ENCODE measurements at regions of chr20 and their contacts with region 1.

Region 1: DNA sequence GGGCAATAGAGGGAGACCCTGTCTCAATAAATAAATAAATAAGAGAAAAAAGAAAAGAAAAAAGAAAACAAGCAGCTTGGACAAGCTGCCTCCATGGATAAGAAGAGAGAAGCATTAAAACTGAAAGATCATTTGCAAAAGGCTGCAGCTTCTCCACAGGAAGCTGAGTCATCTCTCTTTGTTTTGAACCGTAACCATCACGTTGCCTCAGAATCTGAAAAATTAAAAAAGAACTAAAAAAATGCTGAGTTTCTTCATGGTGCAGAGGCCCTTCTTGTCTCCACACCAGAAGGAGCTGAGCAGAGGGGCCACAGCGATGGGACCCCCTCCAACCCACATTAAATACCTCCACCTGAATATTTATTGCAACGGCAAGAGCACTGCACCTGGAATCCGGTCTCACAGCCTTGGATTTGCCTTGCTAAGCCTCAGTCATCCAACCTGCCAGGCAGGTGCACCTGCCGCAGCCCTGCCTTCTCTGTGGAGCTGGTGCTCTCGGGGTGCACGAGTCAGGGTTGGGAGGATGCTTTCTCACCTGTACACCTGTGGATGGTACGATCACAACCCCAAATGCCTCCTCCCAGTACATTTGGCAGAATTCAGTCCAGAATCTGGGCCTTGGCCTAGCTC is 28.1 kb downstream of the TOX2 start:
- DNase-seq: peak; percentile 85
- ATAC-seq: peak; percentile 31
- H3K4me3 ChIP-seq: no peak overlapping the region
- H3K27ac ChIP-seq: peak overlapping the region; percentile 77
- H3K4me1 ChIP-seq: peaks cover 39% of the 10 kb centered on the region
- H3K27me3 ChIP-seq: no peaks in the 10 kb centered on the region
- CTCF ChIP-seq: no peak
- POLR2A ChIP-seq: no peak
- RAD21 ChIP-seq: no peak

Region 2: DNA sequence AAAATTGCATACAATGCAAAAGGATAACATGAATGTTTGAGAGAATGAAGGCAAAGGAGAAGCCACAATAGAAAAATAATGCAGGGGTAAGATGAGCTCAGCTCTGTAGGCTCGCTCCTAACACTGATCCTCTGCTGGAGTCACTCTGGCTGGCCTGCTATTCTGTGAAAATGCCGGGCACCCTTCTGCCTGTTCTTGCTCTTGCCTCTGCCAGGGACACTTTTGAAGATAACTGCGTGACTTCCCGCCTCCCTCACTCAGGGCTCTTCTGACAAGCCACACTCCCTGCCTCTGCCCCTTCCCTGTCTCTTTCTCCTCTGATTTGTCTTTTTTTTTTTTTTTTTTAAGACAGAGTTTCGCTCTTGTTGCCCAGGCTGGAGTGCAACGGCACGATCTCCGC is 311.2 kb before region 1 on chr20:
- CTCF ChIA-PET with region 1: no interaction called
- POLR2A ChIA-PET with region 1: no interaction called
- dilution Hi-C with region 1: no loop called
- in situ Hi-C with region 1: no loop called
- intact Hi-C with region 1: no loop called
- DNase-seq: no peak
- ATAC-seq: no peak
- H3K4me3 ChIP-seq: no peak overlapping the region
- H3K27ac ChIP-seq: no peak overlapping the region
- H3K4me1 ChIP-seq: no peaks in the 10 kb centered on the region
- H3K27me3 ChIP-seq: no peaks in the 10 kb centered on the region
- CTCF ChIP-seq: no peak
- POLR2A ChIP-seq: no peak
- RAD21 ChIP-seq: no peak

Region 3: GRCh38 chr20:43914311-43915210 is 28.2 kb before region 1 on chr20 and contains the start of gene TOX2:
- CTCF ChIA-PET with region 1: interaction called, 6 read pairs
- POLR2A ChIA-PET with region 1: no interaction called
- dilution Hi-C with region 1: no loop called
- in situ Hi-C with region 1: no loop called
- intact Hi-C with region 1: loop called (anchors 2 kb)
- DNase-seq: no peak
- ATAC-seq: peak; percentile 92
- H3K4me3 ChIP-seq: peak within 1 kb of the TSS; percentile 61
- H3K27ac ChIP-seq: peak within 1 kb of the TSS; percentile 89
- H3K4me1 ChIP-seq: peaks cover 7% of the 10 kb centered on the region; the same call in 1 of the 2 replicates
- H3K27me3 ChIP-seq: no peaks in the 10 kb centered on the region
- CTCF ChIP-seq: no peak
- POLR2A ChIP-seq: no peak
- RAD21 ChIP-seq: no peak
- total RNA-seq, gene TOX2: 1.1 and 1.3 TPM in 2 replicates

Region 4: DNA sequence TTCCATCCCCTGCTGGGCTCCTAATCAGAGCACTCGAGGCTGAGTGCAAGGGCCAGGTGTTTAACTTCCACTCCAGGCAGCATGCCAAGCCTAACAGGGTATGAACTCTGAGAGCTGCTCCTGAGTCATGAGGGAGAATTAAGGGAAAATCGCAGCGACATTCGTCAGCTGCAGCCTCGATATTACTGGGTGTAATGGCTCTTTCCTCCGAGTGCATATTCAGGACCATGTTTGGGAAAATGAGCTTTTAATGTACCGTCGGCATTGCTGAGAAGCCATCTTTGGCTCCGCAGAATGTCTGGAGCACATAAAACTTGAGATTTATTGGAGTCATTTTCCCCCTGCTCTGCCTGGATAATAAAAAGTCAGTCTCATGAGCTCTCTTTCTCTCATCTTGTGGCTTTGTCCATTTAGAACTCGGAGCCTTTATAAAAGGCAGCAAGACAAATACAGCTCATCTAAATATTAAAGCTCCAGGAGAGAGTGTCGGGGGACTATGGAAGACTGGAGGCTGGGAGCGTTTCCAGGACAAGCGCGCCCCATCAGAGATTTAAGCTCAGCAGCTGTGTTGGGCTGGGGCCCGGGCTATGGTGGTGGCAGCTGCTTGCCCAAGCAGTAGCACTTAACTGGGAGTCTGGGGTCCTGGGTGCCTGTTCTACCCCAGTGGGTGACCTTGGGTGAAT is 75.6 kb after region 1 on chr20:
- CTCF ChIA-PET with region 1: no interaction called
- POLR2A ChIA-PET with region 1: no interaction called
- dilution Hi-C with region 1: no loop called
- in situ Hi-C with region 1: no loop called
- intact Hi-C with region 1: loop called (anchors 5 kb)
- DNase-seq: peak; percentile 93
- ATAC-seq: peak; percentile 84
- H3K4me3 ChIP-seq: no peak overlapping the region
- H3K27ac ChIP-seq: peak overlapping the region; percentile 30
- H3K4me1 ChIP-seq: peaks cover 13% of the 10 kb centered on the region
- H3K27me3 ChIP-seq: no peaks in the 10 kb centered on the region
- CTCF ChIP-seq: no peak
- POLR2A ChIP-seq: no peak
- RAD21 ChIP-seq: no peak

Region 5: GRCh38 chr20:44069203-44070011 is 126.6 kb after region 1 on chr20:
- CTCF ChIA-PET with region 1: no interaction called
- POLR2A ChIA-PET with region 1: no interaction called
- dilution Hi-C with region 1: no loop called
- in situ Hi-C with region 1: no loop called
- intact Hi-C with region 1: loop called (anchors 10 kb)
- DNase-seq: no peak
- ATAC-seq: no peak
- H3K4me3 ChIP-seq: no peak overlapping the region
- H3K27ac ChIP-seq: no peak overlapping the region
- H3K4me1 ChIP-seq: peaks cover under 1% of the 10 kb centered on the region
- H3K27me3 ChIP-seq: no peaks in the 10 kb centered on the region
- CTCF ChIP-seq: no peak
- POLR2A ChIP-seq: no peak
- RAD21 ChIP-seq: no peak

Region 6: GRCh38 chr20:44342248-44342647 is 399.5 kb after region 1 on chr20:
- CTCF ChIA-PET with region 1: no interaction called
- POLR2A ChIA-PET with region 1: no interaction called
- dilution Hi-C with region 1: no loop called
- in situ Hi-C with region 1: no loop called
- intact Hi-C with region 1: no loop called
- DNase-seq: peak; percentile 8
- ATAC-seq: peak; percentile 76
- H3K4me3 ChIP-seq: no peak overlapping the region
- H3K27ac ChIP-seq: no peak overlapping the region
- H3K4me1 ChIP-seq: no peaks in the 10 kb centered on the region
- H3K27me3 ChIP-seq: peaks cover 20% of the 10 kb centered on the region
- CTCF ChIP-seq: no peak
- POLR2A ChIP-seq: no peak
- RAD21 ChIP-seq: no peak

Measured in IMR-90 (cell line).